Activated CD4-positive, alpha-beta T cell treated with anti-CD3 and anti-CD28 coated beads for 36 hours (primary cell): ENCODE measurements at regions of chr1 and their contacts with region 1.

Region 1: GRCh38 chr1:1906185-1907097 is 8.6 kb upstream of the CALML6 start:
- DNase-seq: peak; percentile 86
- ATAC-seq: peak; percentile 52
- H3K4me3 Mint-ChIP-seq: peak overlapping the region; percentile 0
- H3K27ac Mint-ChIP-seq: no peak overlapping the region
- H3K4me1 Mint-ChIP-seq: peaks cover 14% of the 10 kb centered on the region
- H3K27me3 Mint-ChIP-seq: no peaks in the 10 kb centered on the region

Region 2: GRCh38 chr1:1206376-1207260 is 699.8 kb before region 1 on chr1 and contains the start of gene TNFRSF18:
- CTCF ChIA-PET with region 1: no interaction called
- POLR2A ChIA-PET with region 1: no interaction called
- intact Hi-C with region 1: no loop called
- DNase-seq: peak; percentile 75
- ATAC-seq: peak; percentile 7
- H3K4me3 Mint-ChIP-seq: peak within 1 kb of the TSS; percentile 77
- H3K27ac Mint-ChIP-seq: peak within 1 kb of the TSS; percentile 99
- H3K4me1 Mint-ChIP-seq: peaks cover 31% of the 10 kb centered on the region
- H3K27me3 Mint-ChIP-seq: no peaks in the 10 kb centered on the region
- total RNA-seq, gene TNFRSF18: 95.0 to 164 TPM

Region 3: DNA sequence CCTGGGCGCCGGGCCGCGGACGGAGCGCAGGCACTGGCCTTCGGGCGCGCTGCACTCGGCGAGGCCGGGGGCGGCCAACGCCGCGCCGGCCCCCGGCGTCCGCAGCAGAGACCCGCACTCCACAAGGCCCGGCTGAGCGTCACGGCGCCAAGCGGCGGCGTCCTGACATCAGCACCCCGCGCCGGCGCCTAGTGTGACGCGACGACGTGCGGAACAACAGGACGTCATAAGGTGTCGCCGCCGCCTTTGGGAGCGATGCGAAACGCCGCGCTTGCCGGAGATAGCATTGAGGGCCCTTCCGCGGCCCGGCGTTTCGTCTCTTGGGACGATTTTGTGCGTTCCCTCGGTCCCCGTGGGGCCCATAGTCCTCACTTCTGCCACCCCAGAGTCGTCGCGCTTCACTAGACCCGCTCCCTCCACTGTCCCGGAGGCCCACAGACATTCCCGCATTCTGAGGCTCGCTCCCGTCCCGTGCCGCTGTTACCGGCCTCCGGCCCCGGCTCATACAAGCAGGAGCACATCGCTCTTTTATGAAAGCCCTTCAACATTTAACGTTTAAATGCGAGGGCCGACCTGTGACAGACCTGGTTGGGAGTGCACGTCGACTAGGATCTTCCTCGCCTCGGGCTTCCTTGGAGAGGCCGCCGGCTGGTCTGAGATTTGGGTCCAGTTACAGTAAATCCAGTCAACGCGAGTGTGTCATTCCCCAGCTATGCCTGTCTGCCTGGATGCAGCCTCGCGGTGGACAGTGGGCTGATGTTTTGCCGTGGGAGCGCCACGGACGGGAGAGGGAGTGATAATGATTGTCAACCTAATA is 331.5 kb before region 1 on chr1 and contains the start of gene SSU72:
- CTCF ChIA-PET with region 1: interaction called, 3 read pairs
- POLR2A ChIA-PET with region 1: no interaction called
- intact Hi-C with region 1: loop called in 1 of 2 experiments (anchors 5 kb)
- DNase-seq: peak; percentile 97
- ATAC-seq: peak; percentile 84
- H3K4me3 Mint-ChIP-seq: peak within 1 kb of the TSS; percentile 99
- H3K27ac Mint-ChIP-seq: peak within 1 kb of the TSS; percentile 98
- H3K4me1 Mint-ChIP-seq: peaks cover 28% of the 10 kb centered on the region
- H3K27me3 Mint-ChIP-seq: no peaks in the 10 kb centered on the region
- total RNA-seq, gene SSU72: 105 to 123 TPM

Region 4: GRCh38 chr1:1748686-1749321 is 157.6 kb before region 1 on chr1:
- CTCF ChIA-PET with region 1: no interaction called
- POLR2A ChIA-PET with region 1: no interaction called
- intact Hi-C with region 1: loop called in 1 of 2 experiments (anchors 2 kb)
- DNase-seq: no peak
- ATAC-seq: no peak
- H3K4me3 Mint-ChIP-seq: no peak overlapping the region
- H3K27ac Mint-ChIP-seq: peak overlapping the region; percentile 8
- H3K4me1 Mint-ChIP-seq: peaks cover 3% of the 10 kb centered on the region
- H3K27me3 Mint-ChIP-seq: no peaks in the 10 kb centered on the region

Region 5: DNA sequence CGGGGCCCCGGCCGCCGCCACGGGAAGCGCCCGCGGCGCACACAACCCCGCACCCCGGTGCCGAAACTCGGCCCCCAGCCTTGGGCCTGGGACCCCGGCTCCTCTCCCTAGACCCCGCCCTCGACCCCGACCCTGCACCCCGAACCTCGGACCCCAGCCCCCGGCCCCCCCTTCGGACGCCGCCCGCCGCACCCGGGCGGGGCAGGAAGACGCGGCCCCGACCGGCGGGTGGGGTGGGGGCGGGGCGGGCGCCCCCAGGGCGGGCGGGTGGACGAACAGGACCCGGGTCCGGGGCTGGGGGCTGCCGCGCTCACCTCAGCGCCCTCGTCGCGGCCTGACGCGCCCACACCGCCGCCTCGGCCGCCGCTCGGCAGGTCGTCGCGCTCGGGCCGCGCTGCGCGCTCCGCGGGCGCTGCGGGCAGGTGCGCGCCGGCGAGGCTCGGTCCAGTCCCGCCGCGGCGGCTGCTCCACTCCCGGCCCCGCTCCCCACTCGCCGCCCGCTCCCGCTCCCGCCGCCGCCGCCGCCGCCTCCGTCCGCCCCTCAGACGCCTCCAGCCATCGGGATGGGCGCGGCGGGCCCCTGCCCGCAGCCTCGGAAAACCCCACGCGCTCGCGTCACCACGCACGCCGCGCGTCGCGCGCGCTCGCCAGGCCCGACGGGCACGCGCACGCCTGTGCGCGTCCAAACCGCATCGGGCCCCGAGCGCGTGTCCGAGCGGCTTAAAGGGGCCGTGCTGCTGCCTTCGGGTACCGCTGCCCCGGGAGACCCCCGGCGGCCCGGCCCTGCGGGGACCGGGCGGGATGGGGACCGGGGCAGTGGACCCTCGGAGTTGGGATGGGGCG is 15.7 kb before region 1 on chr1 and contains the start of gene GNB1:
- CTCF ChIA-PET with region 1: interaction called, 7 read pairs
- POLR2A ChIA-PET with region 1: interaction called, 4 read pairs
- intact Hi-C with region 1: loop called (anchors 1 kb)
- DNase-seq: peak; percentile 91
- ATAC-seq: peak; percentile 47
- H3K4me3 Mint-ChIP-seq: peak within 1 kb of the TSS; percentile 88
- H3K27ac Mint-ChIP-seq: peak within 1 kb of the TSS; percentile 84
- H3K4me1 Mint-ChIP-seq: peaks cover 54% of the 10 kb centered on the region
- H3K27me3 Mint-ChIP-seq: no peaks in the 10 kb centered on the region
- total RNA-seq, gene GNB1: 347 to 669 TPM

Region 6: DNA sequence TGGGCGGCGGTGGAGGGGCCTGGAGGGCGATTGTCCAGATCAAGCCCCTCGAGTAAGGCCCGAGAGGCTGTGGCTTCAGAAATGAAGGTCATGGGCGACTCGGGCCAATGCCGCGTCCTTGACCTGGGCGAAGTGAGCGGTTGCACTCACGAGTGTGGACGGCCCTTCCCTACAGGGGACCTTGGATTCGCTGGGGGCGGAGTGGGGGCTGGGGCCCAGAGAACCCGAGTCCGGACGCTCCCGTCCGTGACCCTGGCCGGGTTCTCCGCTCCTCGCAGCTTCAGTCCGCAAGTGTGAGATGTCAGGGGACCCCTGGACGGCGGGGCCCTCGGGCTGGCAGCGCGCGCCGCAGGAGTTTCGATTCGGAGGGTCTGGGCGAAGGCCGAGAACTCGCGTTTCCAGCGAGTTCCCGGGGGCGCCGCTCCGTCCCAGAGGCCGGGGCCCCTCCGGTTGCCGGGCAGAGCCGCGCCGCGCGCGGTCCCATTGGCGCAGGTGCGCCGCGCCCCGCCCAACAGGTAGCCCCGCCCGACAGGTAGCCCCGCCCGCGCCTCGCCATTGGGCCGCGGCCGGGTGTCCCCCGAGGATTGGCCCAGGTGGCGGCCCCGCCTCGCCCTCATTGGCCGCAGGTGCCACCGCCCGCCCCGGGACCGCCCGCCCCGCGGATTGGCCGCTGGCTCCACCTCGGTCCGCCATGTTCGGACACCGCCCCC is 143.4 kb after region 1 on chr1 and contains the start of gene PRKCZ:
- CTCF ChIA-PET with region 1: interaction called, 3 read pairs
- POLR2A ChIA-PET with region 1: no interaction called
- intact Hi-C with region 1: loop called in 1 of 2 experiments (anchors 1 kb)
- DNase-seq: peak; percentile 95
- ATAC-seq: peak; percentile 98
- H3K4me3 Mint-ChIP-seq: peak within 1 kb of the TSS; percentile 68
- H3K27ac Mint-ChIP-seq: no peak within 1 kb of the TSS
- H3K4me1 Mint-ChIP-seq: peaks cover 24% of the 10 kb centered on the region
- H3K27me3 Mint-ChIP-seq: peaks cover 14% of the 10 kb centered on the region
- total RNA-seq, gene PRKCZ: 9.8 to 10.9 TPM